ENCODE measurements at regions of chr2 and their contacts with region 1.

Region 1: DNA sequence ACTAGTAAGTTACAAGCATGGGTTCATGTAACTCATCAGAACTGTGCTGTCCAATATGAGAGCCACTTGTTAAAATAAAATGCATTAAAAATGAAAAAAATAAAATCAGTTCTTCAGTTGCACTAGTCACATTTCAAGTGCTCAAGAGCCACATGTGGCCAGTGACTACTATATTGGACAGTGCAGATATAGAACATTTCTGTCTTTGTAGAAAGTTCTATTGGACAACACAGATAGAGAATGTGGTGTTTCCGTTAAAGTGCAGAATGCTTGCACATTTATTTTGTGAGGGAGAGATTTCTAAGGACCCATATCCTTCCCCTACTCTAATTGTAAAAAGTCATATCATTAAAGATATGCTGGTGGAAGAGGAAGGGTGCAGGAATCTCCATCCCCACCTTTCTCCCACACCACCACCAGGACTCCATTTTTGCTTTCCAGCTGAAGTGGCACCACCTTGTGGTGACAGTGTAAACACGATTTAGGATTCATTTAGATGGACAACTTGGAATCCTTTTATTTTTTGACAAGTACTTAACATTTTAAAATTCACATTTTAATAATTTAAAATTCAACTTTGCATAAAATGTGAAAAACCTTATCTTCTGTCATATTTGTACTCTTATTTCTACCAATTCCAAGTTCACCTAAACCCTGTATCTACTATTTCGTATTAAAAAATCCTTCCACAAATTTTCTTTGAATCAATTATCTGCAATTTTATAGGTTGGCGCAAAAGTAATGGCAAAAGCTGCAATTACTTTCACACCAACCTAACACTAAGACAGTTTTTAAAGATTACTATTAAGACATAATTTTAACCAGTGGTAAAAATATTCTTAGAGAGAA is 9.4 kb upstream of the CD302 start:
- DNase-seq: no peak

Region 2: GRCh38 chr2:159773426-159773825 is 34.0 kb before region 1 on chr2:
- intact Hi-C with region 1: no loop called
- DNase-seq: no peak

Region 3: DNA sequence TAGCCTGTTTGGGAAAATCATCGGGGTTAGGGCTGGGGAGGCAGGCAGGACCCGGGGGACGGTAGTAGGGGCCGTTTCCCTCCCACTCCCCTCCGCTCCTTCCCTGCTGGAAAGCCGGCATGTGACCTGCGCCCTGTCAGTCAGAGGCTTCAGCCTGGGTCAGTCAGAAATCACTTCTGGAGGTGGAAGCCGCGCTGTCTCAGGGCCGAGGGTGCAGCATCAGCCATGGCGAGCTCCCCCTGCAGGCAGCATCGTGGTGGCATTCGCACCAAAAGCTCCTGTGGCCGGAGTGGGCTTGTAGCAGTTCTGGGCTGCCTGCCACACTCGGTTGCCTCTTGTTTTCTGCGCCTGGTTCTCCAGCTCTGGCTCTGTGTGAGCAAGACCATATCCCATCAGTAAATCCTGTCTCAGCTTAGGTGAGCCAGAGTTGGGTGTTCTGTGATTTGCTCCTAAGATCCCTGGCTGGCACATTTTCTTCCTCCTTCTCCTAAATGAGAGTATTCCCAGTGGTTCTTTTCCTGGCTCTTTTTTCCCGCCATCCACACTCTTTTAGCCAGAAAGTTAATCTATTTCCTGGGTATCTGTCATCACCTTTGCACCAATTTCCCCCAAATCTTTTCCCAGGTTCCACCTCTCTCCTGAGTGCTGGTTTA is 114.5 kb after region 1 on chr2:
- intact Hi-C with region 1: loop called (anchors 5 kb)
- DNase-seq: peak; percentile 90

Region 4: GRCh38 chr2:159968279-159968900 is 161.0 kb after region 1 on chr2:
- intact Hi-C with region 1: loop called (anchors 5 kb)
- DNase-seq: no peak

Region 5: DNA sequence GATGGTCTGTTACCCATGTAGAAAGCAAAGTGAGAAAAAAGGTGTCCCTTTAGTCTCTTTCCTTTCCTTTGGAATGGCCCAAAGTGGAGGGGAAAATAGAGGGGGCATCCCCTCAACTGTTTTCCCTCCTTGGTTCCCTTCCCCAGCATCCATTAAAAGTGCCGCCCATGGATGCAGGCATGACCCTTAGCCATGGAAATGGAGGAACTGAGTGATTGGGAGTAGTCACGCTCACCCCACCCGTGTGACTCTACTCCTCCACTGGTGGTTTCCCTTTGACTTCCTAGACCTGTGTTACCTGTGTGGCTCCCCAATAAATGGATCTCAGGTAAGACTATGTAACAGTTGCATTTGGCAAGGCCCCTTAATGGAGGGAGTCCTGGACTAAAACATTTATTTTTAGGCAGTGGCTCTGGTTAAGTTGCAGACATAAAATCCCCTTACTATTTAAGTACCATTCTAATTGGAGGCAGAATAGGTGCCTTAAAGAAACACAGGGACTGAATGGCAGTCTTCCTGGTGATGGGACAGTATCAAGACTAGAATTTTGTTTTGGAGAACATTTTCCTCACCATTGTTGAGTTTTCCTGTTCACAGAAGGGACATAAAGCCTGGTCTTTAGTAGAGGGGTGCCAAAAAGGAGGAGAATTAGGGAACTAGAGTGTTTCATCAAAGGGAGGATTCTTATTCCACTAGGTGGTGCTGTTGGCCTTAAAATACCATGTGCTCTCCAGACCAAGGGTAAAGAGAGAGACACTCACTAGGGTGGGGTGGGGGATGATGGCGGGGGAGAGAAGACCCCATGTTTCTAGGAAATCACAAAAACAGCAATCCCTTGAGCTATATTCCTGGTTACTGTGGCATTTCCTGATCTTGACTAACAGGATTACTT is 280.7 kb after region 1 on chr2:
- intact Hi-C with region 1: no loop called
- DNase-seq: no peak